ENCODE measurements at regions of chr5 and their contacts with region 1.

Region 1: DNA sequence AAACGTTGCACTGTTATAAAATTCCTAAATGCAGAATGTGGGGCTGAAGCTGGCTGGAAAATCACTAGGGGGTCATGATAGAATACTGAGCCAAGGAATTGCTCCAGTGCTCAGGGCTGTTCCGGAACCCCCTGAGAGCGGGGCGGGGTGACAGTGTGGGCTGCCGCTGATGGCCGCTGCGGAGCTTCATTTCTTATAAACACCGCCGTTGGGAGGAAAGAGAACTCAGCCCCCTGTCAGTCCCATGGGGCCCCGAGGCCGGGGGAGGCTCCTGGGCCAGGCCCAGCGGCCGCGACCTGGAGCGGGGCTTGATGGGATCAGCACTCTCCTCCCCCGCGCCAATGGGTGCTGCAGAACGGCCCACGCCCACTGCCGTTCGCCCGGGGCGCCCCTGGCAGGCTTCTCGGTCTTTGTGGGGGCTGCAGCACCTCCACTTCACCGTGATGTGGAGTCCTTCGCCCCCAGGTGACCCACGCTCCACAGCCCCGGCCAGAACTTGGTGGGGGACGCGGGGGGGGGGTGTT is 5.2 kb upstream of the IRF1 start:
- DNase-seq: peak; percentile 54

Region 2: DNA sequence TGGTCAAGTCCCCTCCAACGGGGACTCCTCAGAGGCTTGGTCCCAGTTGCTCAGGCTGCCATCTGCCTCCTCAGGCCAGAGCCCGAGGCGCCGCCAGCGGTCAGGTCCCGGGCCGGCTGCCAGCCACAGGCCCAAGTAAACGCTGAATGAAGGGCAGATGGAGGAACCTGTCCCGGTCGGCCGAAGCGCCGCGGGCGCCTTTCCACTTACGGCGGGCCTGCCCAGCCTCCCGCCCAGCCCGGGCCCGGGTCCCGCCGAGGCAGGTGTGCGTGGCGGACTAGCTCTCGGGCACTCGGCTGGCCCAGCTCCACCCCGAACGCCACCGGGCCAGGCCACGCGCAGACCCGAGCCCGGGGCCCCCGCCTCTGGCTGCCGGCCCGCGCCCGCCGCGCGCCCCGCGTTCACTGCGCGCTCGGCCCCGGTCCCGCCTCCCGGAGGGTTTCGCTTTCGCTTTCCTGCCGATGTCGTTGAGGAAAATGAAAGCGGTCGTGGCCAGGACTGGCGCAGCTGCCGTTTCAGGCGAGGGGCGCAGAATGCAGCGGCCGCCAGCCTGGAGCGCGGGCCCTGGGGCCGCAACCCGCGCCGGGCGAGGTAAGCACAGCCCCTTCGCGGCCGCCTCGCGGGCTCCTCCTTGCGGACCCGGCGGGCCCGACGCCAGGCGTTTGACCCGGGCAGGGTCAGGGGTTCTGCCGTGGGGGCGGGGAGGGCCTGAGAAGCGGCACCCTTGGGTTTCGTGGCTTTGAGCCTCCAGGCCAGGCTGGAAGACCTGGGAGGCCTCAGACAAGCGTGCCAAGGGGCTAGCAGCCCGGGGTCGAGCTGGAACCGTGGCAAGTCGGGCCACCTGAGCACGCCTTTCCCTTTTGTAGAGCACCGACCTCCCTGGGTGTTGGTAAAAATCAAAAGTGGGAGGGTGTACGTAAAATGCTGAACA is 85.0 kb before region 1 on chr5:
- CTCF ChIA-PET with region 1: interaction called, 6 read pairs
- POLR2A ChIA-PET with region 1: interaction called, 10 read pairs
- DNase-seq: peak; percentile 86

Region 3: GRCh38 chr5:132530946-132531345 is 35.2 kb after region 1 on chr5:
- CTCF ChIA-PET with region 1: no interaction called
- POLR2A ChIA-PET with region 1: no interaction called
- DNase-seq: no peak

Region 4: DNA sequence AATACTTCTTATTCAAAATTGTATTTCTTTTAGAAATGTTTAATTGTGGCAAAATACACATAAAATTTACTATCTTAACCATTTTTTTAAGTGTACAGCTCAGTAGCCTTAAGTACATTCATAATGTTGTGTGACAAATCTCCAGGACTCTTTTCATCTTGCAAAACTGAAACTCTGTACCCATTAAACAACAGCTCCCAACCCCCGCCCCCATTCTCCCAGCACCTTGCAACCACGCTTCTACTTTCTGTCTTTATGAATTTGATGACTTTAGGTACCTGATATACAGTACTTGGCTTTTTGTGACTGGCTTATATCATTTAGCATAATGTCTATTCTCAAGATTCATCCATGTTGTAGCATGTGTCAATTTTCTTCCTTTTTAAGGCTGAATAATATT is 50.4 kb after region 1 on chr5:
- CTCF ChIA-PET with region 1: no interaction called
- POLR2A ChIA-PET with region 1: no interaction called
- DNase-seq: no peak